Head of caudate nucleus (tissue), 42 donors: ENCODE measurements at regions of chr6 and their contacts with region 1.

Region 1: DNA sequence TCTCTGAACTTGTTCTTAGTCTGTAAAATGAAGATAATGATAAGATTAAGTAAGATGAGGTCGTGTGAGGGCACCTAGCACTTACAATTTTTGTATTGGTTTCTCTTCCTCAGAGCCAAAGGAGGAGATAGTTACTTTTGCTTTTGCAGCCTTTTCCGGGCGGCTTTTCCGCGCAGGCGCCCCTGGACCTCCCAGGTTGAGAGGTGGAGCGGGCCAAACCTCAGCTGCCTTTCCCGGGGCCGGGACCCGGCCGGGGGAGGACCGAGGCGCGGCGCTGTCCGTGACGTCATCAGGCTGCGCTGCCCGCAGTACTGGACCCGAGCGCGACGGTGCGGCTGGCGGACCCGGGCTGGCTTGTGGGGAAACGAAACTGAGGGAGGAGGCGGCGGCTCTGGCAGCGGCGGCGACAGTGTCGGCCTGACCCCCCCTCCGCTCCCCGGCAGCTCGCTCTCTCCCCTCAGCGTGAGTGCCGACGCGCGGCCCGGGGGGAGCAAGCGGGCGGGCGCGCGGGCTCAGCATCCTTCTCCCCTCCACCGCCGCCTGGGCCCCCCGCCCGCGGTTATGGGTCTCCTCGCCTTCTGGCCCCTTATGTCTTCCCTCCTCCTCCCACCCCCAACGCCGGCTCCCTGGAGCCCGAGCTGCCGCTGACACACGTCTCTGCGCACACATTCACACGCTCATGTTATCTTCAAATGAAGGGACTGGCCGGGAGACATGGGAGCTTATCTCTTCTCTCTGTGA is at the start of gene CMTR1:
- DNase-seq: peak; percentile 83 to 98 (median 94)

Region 2: DNA sequence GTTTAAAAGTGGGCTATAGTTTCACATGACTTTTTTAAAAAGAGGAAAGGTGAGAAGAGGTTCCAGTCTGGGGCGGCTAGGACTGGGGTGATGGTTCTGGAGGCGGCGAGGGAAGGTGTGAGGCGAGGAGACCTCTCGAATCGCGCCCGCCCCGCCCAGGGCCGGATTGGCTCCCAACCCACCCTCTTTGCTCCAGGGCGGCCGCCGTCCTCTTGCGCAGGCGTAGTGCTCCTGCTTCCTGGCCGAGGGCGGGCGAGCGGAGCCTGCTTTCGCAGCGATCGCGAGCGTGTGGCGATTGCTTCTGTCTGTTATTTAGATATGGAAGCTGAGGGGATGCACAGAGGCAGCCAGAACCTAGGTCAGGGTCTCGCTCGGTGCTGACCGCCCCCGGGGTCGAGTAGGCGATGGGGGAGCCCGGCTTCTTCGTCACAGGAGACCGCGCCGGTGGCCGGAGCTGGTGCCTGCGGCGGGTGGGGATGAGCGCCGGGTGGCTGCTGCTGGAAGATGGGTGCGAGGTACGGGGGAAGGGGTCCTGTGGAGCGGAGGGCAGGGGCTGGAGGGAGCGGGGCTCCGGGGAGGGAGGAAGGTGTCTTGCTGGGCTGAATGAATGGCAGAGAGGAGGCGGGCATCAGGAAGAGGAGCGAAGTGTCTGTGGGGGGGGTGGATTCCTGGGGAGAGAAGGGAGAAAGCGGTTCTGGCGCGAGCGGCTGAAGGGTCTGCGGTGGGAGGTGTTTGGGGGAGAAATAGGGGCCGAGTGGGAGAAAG is 79.1 kb before region 1 on chr6 and contains the start of gene RNF8:
- intact Hi-C with region 1: loop called (anchors 10 kb)
- DNase-seq: peak; percentile 77 to 96 (median 92)

Region 3: DNA sequence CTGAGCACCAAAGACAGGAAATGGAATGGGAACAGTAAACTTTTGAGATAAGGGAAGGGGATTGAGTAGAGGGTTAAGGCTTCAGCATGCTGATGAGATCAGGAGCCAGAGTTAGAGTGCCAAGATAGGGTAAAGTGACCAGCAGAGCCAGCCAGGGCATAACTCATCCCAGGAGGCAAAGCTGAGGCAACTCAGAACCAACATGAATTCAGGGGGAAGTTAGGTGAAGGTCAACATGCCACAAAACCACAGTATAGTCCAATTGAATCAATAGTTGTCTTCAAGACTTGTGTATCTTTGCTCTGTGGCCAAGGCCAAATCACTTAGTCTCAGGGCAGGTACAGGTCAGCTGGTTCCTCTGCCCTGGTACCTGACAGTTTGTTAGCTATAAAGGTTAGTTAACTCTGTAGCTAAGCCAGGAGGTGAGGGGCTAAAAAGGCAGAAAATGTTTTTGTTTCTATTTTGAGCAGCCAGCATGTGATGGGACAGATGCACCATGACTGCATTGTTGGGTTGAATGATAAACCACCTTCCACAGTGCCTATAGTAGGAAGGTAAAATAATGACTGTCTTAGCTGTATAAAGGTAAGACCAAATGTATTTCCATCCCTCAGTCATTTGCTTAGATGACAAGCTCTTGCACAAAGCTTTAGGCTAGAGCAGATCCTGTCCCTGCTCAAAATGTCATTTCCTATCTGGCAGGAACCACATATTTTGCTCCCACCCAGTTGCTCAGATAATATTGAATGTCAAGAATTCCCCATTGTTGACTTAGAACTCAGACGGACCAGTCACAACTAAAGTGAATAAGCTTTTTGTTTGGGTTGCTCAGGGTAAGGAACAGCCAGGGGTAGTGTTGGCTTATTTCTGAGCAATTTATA is 63.5 kb before region 1 on chr6:
- intact Hi-C with region 1: no loop called
- DNase-seq: peak in 2 of 42 donors; percentile 8 to 21

Region 4: GRCh38 chr6:37499433-37500293 is 66.6 kb after region 1 on chr6 and contains the start of gene CCDC167:
- intact Hi-C with region 1: loop called (anchors 10 kb)
- DNase-seq: peak; percentile 91 to 98 (median 95)